ENCODE measurements at regions of chr3 and their contacts with region 1.

Region 1: DNA sequence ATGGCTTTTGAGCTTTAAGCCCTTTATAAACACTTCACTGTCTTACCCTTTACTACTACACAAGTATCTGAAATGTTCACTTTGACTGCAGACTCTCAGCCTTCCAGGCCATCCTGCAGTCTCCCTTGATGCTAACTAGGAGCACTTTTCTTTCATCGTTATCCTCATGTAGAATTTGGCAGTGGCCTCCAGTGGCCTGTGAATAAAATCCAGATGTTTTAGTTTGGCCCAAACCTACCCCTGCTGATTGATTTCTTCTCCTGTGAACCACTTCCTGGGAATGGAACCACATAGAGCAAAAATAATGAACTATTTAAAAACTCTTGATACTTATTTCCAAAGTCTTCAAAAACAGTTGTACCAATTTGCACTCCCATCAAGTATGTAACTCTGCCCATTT is 271.9 kb downstream of the FEZF2 start:
- DNase-seq: no peak
- ATAC-seq: no peak
- H3K4me3 ChIP-seq: no peak overlapping the region
- H3K27ac ChIP-seq: no peak overlapping the region
- H3K4me1 ChIP-seq: peaks cover 50% of the 10 kb centered on the region
- H3K27me3 ChIP-seq: no peaks in the 10 kb centered on the region
- CTCF ChIP-seq: no peak

Region 2: DNA sequence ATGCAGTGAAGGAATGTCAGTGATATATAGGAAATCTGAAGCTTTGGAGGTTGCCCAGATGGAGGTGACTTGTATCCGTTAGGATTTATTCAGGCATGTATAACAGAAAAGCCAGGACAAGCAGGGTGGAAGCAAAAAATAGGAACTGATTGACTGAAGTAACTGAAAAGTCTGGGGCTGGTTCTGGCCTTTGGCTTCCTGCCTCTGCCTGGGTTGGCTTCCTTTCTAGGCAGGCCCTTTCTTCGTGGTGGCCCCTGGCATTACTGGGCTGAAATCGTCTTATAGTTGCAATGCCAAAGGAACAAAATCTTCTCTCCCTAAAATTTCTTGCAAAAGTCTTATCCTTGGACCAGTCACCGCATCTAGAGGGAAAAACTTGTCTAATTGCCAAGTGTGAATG is 154.0 kb before region 1 on chr3:
- intact Hi-C with region 1: no loop called
- DNase-seq: peak in 1 of 2 donors; percentile 25
- ATAC-seq: no peak
- H3K4me3 ChIP-seq: no peak overlapping the region
- H3K27ac ChIP-seq: no peak overlapping the region
- H3K4me1 ChIP-seq: peaks cover 44% of the 10 kb centered on the region
- H3K27me3 ChIP-seq: no peaks in the 10 kb centered on the region
- CTCF ChIP-seq: no peak

Region 3: DNA sequence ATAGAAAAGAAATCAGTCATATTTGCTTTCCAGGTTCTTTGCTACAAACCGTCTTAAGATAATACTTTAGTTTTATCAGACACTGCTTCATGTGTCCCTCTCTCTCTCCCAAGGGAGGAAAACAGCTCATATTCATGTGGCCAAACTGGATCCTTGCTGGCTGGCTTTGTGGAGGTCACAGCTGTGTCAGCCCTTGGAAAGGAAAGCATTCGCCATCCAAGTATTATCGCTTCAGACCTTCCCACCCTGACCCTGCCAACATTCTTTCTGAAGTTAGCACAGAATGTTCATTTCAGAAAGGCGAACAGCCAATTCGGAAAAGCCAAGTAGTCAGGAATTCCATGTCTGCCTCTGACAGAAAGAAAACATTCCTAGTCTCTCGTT is 58.2 kb after region 1 on chr3:
- intact Hi-C with region 1: loop called (anchors 2 to 5 kb)
- DNase-seq: peak; percentile 76 to 89
- ATAC-seq: peak; percentile 87 to 91 (median 90)
- H3K4me3 ChIP-seq: peak overlapping the region; percentile 45
- H3K27ac ChIP-seq: peak overlapping the region; percentile 86
- H3K4me1 ChIP-seq: peaks cover 75% of the 10 kb centered on the region
- H3K27me3 ChIP-seq: no peaks in the 10 kb centered on the region
- CTCF ChIP-seq: no peak